GM12878 (cell line): ENCODE measurements at regions of chr10 and their contacts with region 1.

Region 1: GRCh38 chr10:97072851-97073665 is 112.7 kb downstream of the SLIT1 start:
- DNase-seq: peak; percentile 13
- ATAC-seq: peak; percentile 94
- H3K4me3 ChIP-seq: no peak overlapping the region
- H3K27ac ChIP-seq: no peak overlapping the region
- H3K4me1 ChIP-seq: no peaks in the 10 kb centered on the region
- H3K27me3 ChIP-seq: peaks cover 0 to 4% of the 10 kb centered on the region in 2 experiments; a peak in 2 of 4 replicates
- CTCF ChIP-seq: peak; percentile 94 to 96 (median 95)
- EP300 ChIP-seq: no peak
- POLR2A ChIP-seq: no peak
- RAD21 ChIP-seq: peak; percentile 97

Region 2: DNA sequence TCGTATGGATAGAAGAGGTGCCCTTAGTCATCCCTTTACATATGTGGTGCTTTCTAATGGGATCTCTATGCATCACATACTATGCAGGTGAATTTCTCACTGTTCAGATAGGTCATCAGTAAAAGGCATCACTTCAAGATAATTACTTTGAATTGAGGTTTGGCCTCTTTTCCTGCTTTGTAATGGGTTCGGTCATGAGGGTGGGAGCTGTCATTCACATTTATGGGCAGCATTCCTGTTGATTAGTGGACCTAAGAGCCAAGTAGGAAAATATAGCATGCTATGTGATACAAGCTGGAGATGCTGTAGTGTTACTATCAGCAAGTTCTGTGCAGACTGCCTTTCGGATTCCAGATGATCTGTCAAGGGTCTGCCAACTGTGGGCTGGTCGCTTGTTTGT is 84.6 kb before region 1 on chr10:
- CTCF ChIA-PET with region 1: no interaction called
- POLR2A ChIA-PET with region 1: no interaction called
- RAD21 ChIA-PET with region 1: no interaction called
- SMC1A ChIA-PET with region 1: no interaction called
- in situ Hi-C with region 1: no loop called
- intact Hi-C with region 1: no loop called
- DNase-seq: no peak
- ATAC-seq: no peak
- H3K4me3 ChIP-seq: no peak overlapping the region
- H3K27ac ChIP-seq: no peak overlapping the region
- H3K4me1 ChIP-seq: peaks cover 29% of the 10 kb centered on the region
- H3K27me3 ChIP-seq: no peaks in the 10 kb centered on the region
- CTCF ChIP-seq: no peak
- EP300 ChIP-seq: no peak
- POLR2A ChIP-seq: no peak
- RAD21 ChIP-seq: no peak

Region 3: DNA sequence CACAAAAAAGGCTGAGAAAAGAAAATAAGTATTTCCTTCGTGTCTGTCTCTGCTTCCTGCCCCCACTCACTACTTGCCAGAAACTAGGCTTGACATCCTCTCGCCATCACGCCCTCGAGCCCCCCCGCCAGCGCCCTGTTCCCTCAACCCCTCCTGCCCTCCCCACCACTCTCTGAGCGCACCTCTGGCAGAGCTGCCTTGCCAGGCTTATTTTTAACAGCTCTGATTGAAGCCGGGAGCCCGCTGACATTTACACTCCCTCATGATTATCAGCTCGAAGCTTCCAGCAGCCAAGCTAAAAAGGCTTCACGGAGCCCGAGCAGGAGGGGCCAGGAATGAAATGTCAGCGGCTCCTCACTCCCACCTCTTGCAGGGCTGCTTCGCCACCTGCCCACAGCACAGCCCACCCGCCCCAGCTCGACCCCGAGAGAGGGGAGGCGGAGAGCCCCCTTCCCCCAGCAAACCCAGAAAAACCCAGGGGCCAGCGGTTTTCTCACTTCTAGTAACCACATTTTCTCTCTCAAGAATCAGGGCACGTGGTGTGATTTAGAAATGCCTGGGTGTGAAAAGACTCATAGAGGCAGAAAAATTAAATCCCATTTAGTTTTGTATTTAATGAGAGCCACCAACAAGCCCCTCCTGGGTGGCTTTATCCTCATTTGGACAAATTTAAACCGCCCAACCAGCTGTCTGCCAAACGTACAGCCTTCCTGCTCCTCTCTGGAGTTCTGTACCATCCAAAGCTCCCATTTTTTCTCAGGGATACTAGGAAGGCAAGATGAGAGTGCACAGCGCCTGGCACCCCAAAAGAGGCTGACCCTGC is 23.4 kb after region 1 on chr10:
- CTCF ChIA-PET with region 1: interaction called, 10 read pairs
- POLR2A ChIA-PET with region 1: no interaction called
- RAD21 ChIA-PET with region 1: interaction called, 9 read pairs
- SMC1A ChIA-PET with region 1: interaction called, 4 read pairs
- in situ Hi-C with region 1: no loop called
- intact Hi-C with region 1: no loop called
- DNase-seq: no peak
- ATAC-seq: peak; percentile 62
- H3K4me3 ChIP-seq: no peak overlapping the region
- H3K27ac ChIP-seq: no peak overlapping the region
- H3K4me1 ChIP-seq: peaks cover 3% of the 10 kb centered on the region; the same call in 1 of the 2 replicates
- H3K27me3 ChIP-seq: peaks cover 0 to 5% of the 10 kb centered on the region in 2 experiments
- CTCF ChIP-seq: no peak
- EP300 ChIP-seq: no peak
- POLR2A ChIP-seq: no peak
- RAD21 ChIP-seq: no peak

Region 4: DNA sequence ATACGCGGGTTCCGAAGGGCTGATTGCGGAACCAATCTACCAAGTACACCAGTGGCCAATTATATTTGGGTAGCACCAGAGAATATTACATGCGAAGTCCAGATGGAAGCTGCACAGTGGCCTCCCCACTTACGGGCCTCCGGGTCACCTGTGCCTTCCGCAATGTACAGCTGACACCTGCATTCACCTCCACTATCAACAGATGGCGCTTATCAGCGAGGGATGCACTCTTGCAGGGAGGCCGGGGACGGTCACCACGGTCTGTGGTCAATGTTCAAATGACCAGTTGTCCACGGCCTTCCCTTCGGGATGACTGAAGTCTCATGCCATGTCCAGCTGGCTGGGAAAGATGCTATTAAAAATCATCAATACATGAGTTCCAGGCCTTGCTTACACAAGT is 65.1 kb after region 1 on chr10:
- CTCF ChIA-PET with region 1: interaction called, 13 read pairs
- POLR2A ChIA-PET with region 1: no interaction called
- RAD21 ChIA-PET with region 1: no interaction called
- SMC1A ChIA-PET with region 1: no interaction called
- in situ Hi-C with region 1: no loop called
- intact Hi-C with region 1: no loop called
- DNase-seq: no peak
- ATAC-seq: 0 out of 3 replicates have a peak, but pooled peaks have one; percentile 20
- H3K4me3 ChIP-seq: no peak overlapping the region
- H3K27ac ChIP-seq: no peak overlapping the region
- H3K4me1 ChIP-seq: no peaks in the 10 kb centered on the region
- H3K27me3 ChIP-seq: peaks cover 0 to 5% of the 10 kb centered on the region in 2 experiments; a peak in 2 of 4 replicates
- CTCF ChIP-seq: peak; percentile 19 to 46 (median 24); a peak in 4 of 6 replicates
- EP300 ChIP-seq: no peak
- POLR2A ChIP-seq: no peak
- RAD21 ChIP-seq: no peak

Region 5: GRCh38 chr10:97204826-97205679 is 132.0 kb after region 1 on chr10:
- CTCF ChIA-PET with region 1: interaction called, 651 read pairs
- POLR2A ChIA-PET with region 1: no interaction called
- RAD21 ChIA-PET with region 1: interaction called, 128 read pairs
- SMC1A ChIA-PET with region 1: interaction called, 112 read pairs
- in situ Hi-C with region 1: loop called (anchors 5 kb)
- intact Hi-C with region 1: loop called (anchors 1 kb)
- DNase-seq: no peak
- ATAC-seq: no peak
- H3K4me3 ChIP-seq: no peak overlapping the region
- H3K27ac ChIP-seq: no peak overlapping the region
- H3K4me1 ChIP-seq: peaks cover 14% of the 10 kb centered on the region
- H3K27me3 ChIP-seq: no peaks in the 10 kb centered on the region
- CTCF ChIP-seq: no peak
- EP300 ChIP-seq: no peak
- POLR2A ChIP-seq: no peak
- RAD21 ChIP-seq: no peak

Region 6: GRCh38 chr10:97234400-97234799 is 161.3 kb after region 1 on chr10:
- CTCF ChIA-PET with region 1: interaction called, 44 read pairs
- POLR2A ChIA-PET with region 1: no interaction called
- RAD21 ChIA-PET with region 1: interaction called, 6 read pairs
- SMC1A ChIA-PET with region 1: interaction called, 7 read pairs
- in situ Hi-C with region 1: no loop called
- intact Hi-C with region 1: loop called (anchors 1 kb)
- DNase-seq: no peak
- ATAC-seq: peak; percentile 39; the same call in 2 of the 3 replicates
- H3K4me3 ChIP-seq: no peak overlapping the region
- H3K27ac ChIP-seq: no peak overlapping the region
- H3K4me1 ChIP-seq: no peaks in the 10 kb centered on the region
- H3K27me3 ChIP-seq: no peaks in the 10 kb centered on the region
- CTCF ChIP-seq: peak; percentile 36 to 54 (median 50); a peak in 5 of 6 replicates
- EP300 ChIP-seq: no peak
- POLR2A ChIP-seq: no peak
- RAD21 ChIP-seq: peak; percentile 66

Region 7: GRCh38 chr10:97475936-97476594 is 403.0 kb after region 1 on chr10:
- CTCF ChIA-PET with region 1: no interaction called
- POLR2A ChIA-PET with region 1: no interaction called
- RAD21 ChIA-PET with region 1: no interaction called
- SMC1A ChIA-PET with region 1: no interaction called
- in situ Hi-C with region 1: no loop called
- intact Hi-C with region 1: no loop called
- DNase-seq: no peak
- ATAC-seq: no peak
- H3K4me3 ChIP-seq: no peak overlapping the region
- H3K27ac ChIP-seq: no peak overlapping the region
- H3K4me1 ChIP-seq: no peaks in the 10 kb centered on the region
- H3K27me3 ChIP-seq: no peaks in the 10 kb centered on the region
- CTCF ChIP-seq: no peak
- EP300 ChIP-seq: no peak
- POLR2A ChIP-seq: no peak
- RAD21 ChIP-seq: no peak